SK-N-SH (cell line): ENCODE measurements at regions of chr11 and their contacts with region 1.

Region 1: DNA sequence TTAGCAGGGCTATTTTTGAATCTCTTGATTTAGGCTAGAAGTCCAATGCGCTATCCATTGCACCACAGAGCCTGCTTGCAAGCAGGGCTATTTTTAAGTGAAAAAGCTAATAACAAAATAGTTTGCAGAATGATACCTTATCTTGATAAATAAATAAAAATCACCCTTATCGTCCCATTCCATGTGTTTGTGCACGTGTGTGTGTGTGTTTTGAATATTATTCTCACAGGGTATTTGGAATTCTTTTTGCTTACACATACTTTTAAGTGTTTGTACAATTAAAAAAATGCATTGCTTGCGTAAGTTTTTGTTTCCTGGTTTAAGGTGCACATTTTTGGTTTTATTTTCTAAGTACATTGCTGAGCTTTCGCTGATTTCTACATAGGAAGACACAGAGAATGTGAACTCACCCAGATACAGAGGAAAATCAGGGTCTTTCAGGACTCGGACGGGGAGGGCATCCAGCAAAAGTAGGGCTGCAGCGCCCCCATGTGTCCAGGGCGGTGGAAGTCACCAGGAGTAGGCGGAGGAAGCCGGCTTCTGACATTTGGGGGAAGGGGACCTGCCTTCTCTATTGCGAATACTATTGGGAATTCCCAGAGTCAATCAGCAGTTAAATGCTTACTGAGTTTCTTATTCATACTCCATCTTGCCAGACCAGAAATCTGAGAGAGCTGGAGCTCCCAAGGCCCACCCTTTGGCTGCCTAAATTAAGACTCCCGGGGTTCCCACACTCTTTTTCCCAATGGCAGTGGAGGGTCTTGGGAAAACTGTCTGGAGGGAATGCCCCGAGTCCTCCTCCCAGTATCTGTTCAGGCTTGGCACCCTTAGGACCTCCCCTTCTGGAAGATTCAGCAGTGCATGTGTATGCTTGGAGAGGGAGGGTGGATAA is 27.2 kb downstream of the SLC1A2 start:
- DNase-seq: peak; percentile 84
- H3K4me3 ChIP-seq: peak overlapping the region in 1 of 2 experiments; percentile 10; a peak in 1 of 4 replicates
- H3K27ac ChIP-seq: no peak overlapping the region
- H3K4me1 ChIP-seq: peaks cover 5 to 28% of the 10 kb centered on the region in 2 experiments; a peak in 2 of 4 replicates
- H3K27me3 ChIP-seq: no peaks in the 10 kb centered on the region
- CTCF ChIP-seq: peak; percentile 98
- EP300 ChIP-seq: no peak
- RAD21 ChIP-seq: peak; percentile 99

Region 2: GRCh38 chr11:34585735-34586487 is 806.3 kb before region 1 on chr11:
- CTCF ChIA-PET with region 1: interaction called, 70 read pairs
- POLR2A ChIA-PET with region 1: no interaction called
- DNase-seq: peak; percentile 33
- H3K4me3 ChIP-seq: no peak overlapping the region; a peak in 1 of 4 replicates
- H3K27ac ChIP-seq: no peak overlapping the region
- H3K4me1 ChIP-seq: peaks cover 0 to 4% of the 10 kb centered on the region in 2 experiments; a peak in 1 of 4 replicates
- H3K27me3 ChIP-seq: peaks cover 4% of the 10 kb centered on the region; the same call in 1 of the 2 replicates
- CTCF ChIP-seq: peak; percentile 74
- EP300 ChIP-seq: no peak
- RAD21 ChIP-seq: peak; percentile 82

Region 3: DNA sequence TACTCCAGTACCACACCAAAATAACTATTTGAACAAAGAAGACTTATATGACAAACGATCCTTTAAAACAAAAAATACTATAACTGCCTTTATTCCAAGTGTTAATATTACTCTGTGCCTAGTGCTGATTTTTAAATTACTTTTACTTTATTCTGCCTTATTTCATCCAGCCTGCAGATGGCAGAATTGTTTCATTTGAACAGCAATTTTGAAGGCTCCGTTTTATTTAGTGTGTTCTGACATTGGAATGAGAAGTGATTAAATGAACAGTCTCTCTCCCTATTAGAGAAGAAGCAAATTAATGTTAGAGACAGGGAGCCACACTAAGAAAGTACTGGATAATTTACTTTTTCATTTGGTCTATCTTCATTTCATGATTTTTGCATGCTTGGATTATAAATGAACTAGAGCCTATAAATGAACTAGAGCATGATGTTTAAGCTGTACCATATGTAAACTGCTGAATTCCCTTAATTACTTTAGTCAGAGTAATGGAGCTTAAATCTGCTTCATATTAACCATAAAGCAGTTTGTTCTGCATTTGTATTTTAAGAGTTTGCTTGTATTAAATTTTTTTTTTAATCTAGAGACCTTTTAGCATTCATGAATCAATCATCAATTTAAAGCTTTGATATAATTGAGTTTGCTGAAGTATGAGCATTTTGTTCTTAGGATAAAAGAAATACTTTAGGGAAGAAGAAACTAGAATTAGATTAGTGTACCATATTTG is 465.9 kb before region 1 on chr11:
- CTCF ChIA-PET with region 1: interaction called, 92 read pairs
- POLR2A ChIA-PET with region 1: no interaction called
- DNase-seq: peak; percentile 34
- H3K4me3 ChIP-seq: peak overlapping the region in 1 of 2 experiments; percentile 7; a peak in 1 of 4 replicates
- H3K27ac ChIP-seq: peak overlapping the region; percentile 63 to 67; a peak in 3 of 4 replicates
- H3K4me1 ChIP-seq: peaks cover 11 to 30% of the 10 kb centered on the region in 2 experiments; a peak in 2 of 4 replicates
- H3K27me3 ChIP-seq: no peaks in the 10 kb centered on the region
- CTCF ChIP-seq: peak; percentile 91
- EP300 ChIP-seq: 0 out of 4 replicates have a peak, but pooled peaks of 1 of the 2 experiments have one; percentile 2
- RAD21 ChIP-seq: peak; percentile 92

Region 4: GRCh38 chr11:35223371-35223796 is 168.8 kb before region 1 on chr11:
- CTCF ChIA-PET with region 1: interaction called, 10 read pairs
- POLR2A ChIA-PET with region 1: no interaction called
- DNase-seq: peak; percentile 81
- H3K4me3 ChIP-seq: no peak overlapping the region; a peak in 1 of 4 replicates
- H3K27ac ChIP-seq: peak overlapping the region; percentile 63 to 90
- H3K4me1 ChIP-seq: peaks cover 14 to 34% of the 10 kb centered on the region in 2 experiments
- H3K27me3 ChIP-seq: no peaks in the 10 kb centered on the region
- CTCF ChIP-seq: no peak
- EP300 ChIP-seq: peak; percentile 56 to 81; a peak in 1 of 4 replicates
- RAD21 ChIP-seq: peak; percentile 40; the same call in 1 of the 2 replicates

Region 5: GRCh38 chr11:35246745-35247144 is 145.4 kb before region 1 on chr11:
- CTCF ChIA-PET with region 1: no interaction called
- POLR2A ChIA-PET with region 1: no interaction called
- DNase-seq: no peak
- H3K4me3 ChIP-seq: no peak overlapping the region
- H3K27ac ChIP-seq: peak overlapping the region; percentile 24 to 58; a peak in 2 of 4 replicates
- H3K4me1 ChIP-seq: no peaks in the 10 kb centered on the region; a peak in 1 of 4 replicates
- H3K27me3 ChIP-seq: no peaks in the 10 kb centered on the region
- CTCF ChIP-seq: no peak
- EP300 ChIP-seq: peak in 1 of 2 experiments; percentile 65; a peak in 1 of 4 replicates
- RAD21 ChIP-seq: no peak

Region 6: DNA sequence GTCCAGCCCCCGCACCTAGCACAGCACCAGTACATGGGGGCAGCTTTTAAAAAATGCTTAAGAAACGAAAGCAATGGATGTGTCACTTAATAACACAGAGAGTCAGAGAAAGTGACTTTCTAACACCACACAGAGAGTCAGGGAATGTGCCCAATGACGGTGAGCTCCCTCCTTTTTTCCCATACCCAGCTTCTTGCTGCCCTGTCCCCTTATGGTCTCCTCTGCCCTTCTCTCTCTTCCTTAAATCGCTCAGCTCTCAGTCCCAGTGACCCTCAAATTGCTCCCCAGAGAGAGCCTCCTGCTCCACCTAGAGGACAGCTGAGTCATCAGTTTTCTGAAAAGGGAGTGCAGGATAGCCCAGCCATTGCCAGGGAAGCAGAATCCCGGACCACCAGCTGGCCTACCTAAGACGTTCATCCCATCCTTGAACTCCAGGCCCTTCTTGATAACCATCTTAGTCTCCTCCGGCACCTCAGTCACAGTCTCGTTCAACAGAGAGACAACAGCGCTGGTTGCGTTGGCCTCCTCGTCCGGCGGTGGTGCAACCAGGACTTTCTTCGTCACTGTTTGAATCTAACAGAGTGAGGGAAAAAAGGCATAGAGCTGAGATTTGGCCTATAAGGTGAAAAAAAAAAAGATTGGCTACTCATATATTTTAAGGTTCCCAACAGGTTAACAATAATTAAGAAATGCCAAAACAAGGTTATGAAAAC is 86.3 kb before region 1 on chr11:
- CTCF ChIA-PET with region 1: interaction called, 18 read pairs
- POLR2A ChIA-PET with region 1: no interaction called
- DNase-seq: peak; percentile 63
- H3K4me3 ChIP-seq: no peak overlapping the region
- H3K27ac ChIP-seq: no peak overlapping the region
- H3K4me1 ChIP-seq: no peaks in the 10 kb centered on the region; a peak in 1 of 4 replicates
- H3K27me3 ChIP-seq: no peaks in the 10 kb centered on the region
- CTCF ChIP-seq: peak; percentile 59
- EP300 ChIP-seq: no peak
- RAD21 ChIP-seq: peak; percentile 85

Region 7: GRCh38 chr11:35373284-35373933 is 18.8 kb before region 1 on chr11:
- CTCF ChIA-PET with region 1: interaction called, 54 read pairs
- POLR2A ChIA-PET with region 1: no interaction called
- DNase-seq: peak; percentile 22
- H3K4me3 ChIP-seq: no peak overlapping the region
- H3K27ac ChIP-seq: no peak overlapping the region
- H3K4me1 ChIP-seq: peaks cover 18 to 24% of the 10 kb centered on the region in 2 experiments
- H3K27me3 ChIP-seq: no peaks in the 10 kb centered on the region
- CTCF ChIP-seq: no peak; the same call in 1 of the 2 replicates
- EP300 ChIP-seq: no peak
- RAD21 ChIP-seq: no peak

Region 8: DNA sequence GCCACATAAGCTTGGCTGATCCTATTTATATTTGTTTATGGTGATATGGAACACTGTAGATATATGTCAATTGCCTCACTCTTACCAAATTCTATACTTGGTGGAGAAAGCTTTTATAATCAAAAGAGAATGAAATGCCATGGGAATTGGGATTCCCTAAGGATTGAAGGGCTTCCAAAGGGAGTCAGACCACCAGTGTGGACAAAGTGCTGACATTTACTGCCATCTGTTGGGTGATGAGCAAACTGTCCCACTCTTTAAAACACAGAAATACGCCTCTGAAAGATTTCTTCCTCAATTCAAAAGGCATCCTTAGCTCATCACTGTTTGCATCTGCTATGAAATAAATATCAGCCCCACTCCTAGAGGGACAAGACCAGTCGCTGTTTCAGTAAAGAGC is 20.1 kb after region 1 on chr11:
- CTCF ChIA-PET with region 1: interaction called, 59 read pairs
- POLR2A ChIA-PET with region 1: no interaction called
- DNase-seq: peak; percentile 63
- H3K4me3 ChIP-seq: no peak overlapping the region; a peak in 1 of 4 replicates
- H3K27ac ChIP-seq: no peak overlapping the region
- H3K4me1 ChIP-seq: no peaks in the 10 kb centered on the region
- H3K27me3 ChIP-seq: peaks cover 31% of the 10 kb centered on the region; the same call in 1 of the 2 replicates
- CTCF ChIP-seq: peak; percentile 62
- EP300 ChIP-seq: no peak
- RAD21 ChIP-seq: peak; percentile 75

Region 9: GRCh38 chr11:35478471-35479091 is 86.4 kb after region 1 on chr11:
- CTCF ChIA-PET with region 1: no interaction called
- POLR2A ChIA-PET with region 1: no interaction called
- DNase-seq: no peak
- H3K4me3 ChIP-seq: no peak overlapping the region
- H3K27ac ChIP-seq: no peak overlapping the region
- H3K4me1 ChIP-seq: peaks cover 0 to 3% of the 10 kb centered on the region in 2 experiments; a peak in 1 of 4 replicates
- H3K27me3 ChIP-seq: no peaks in the 10 kb centered on the region
- CTCF ChIP-seq: no peak
- EP300 ChIP-seq: no peak
- RAD21 ChIP-seq: no peak